ENCODE measurements at regions of chr1 and their contacts with region 1.

Region 1: GRCh38 chr1:205658943-205659581 is 21.2 kb downstream of the SLC45A3 start:
- DNase-seq: peak; percentile 86
- ATAC-seq: peak; percentile 97
- H3K4me3 Mint-ChIP-seq: no peak overlapping the region
- H3K27ac Mint-ChIP-seq: no peak overlapping the region
- H3K4me1 Mint-ChIP-seq: no peaks in the 10 kb centered on the region
- H3K27me3 Mint-ChIP-seq: no peaks in the 10 kb centered on the region
- CTCF ChIP-seq: peak; percentile 90

Region 2: DNA sequence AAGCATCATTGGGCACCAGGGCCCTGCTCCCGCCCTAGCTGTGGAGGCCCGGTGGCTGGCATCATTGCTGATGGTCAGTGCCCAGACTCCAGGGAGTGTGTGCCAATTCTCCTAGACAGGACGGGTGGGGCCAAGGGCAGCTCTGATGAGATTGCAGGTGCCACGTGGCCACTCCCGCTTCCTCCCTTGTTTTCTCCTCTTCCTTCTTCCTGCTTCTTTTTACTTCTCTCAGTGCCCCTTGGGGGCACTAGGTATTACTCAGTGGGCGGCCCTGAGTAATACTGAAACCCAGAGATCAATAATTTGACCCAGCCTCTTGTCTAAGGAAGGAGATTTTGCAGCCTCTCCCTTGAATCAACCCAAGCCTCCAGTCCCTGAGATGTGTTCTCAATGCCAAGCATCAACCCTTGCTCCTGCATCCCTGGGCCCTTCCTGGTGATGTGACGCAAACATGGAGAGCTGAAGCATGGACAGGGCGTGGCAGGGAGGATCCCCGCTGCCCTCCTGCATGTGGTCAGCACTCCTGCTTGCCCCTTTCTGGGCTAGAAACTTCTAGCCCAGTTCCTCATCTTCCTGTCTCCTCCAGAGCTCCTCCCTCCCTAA is 122.2 kb before region 1 on chr1:
- CTCF ChIA-PET with region 1: interaction called, 105 read pairs
- POLR2A ChIA-PET with region 1: no interaction called
- intact Hi-C with region 1: no loop called
- DNase-seq: peak; percentile 24
- ATAC-seq: peak; percentile 39
- H3K4me3 Mint-ChIP-seq: no peak overlapping the region
- H3K27ac Mint-ChIP-seq: no peak overlapping the region
- H3K4me1 Mint-ChIP-seq: peaks cover 6% of the 10 kb centered on the region
- H3K27me3 Mint-ChIP-seq: peaks cover 11% of the 10 kb centered on the region
- CTCF ChIP-seq: no peak

Region 3: GRCh38 chr1:205575294-205575885 is 83.7 kb before region 1 on chr1:
- CTCF ChIA-PET with region 1: interaction called, 15 read pairs
- POLR2A ChIA-PET with region 1: no interaction called
- intact Hi-C with region 1: no loop called
- DNase-seq: no peak
- ATAC-seq: no peak
- H3K4me3 Mint-ChIP-seq: no peak overlapping the region
- H3K27ac Mint-ChIP-seq: no peak overlapping the region
- H3K4me1 Mint-ChIP-seq: no peaks in the 10 kb centered on the region
- H3K27me3 Mint-ChIP-seq: peaks cover 18% of the 10 kb centered on the region
- CTCF ChIP-seq: no peak

Region 4: DNA sequence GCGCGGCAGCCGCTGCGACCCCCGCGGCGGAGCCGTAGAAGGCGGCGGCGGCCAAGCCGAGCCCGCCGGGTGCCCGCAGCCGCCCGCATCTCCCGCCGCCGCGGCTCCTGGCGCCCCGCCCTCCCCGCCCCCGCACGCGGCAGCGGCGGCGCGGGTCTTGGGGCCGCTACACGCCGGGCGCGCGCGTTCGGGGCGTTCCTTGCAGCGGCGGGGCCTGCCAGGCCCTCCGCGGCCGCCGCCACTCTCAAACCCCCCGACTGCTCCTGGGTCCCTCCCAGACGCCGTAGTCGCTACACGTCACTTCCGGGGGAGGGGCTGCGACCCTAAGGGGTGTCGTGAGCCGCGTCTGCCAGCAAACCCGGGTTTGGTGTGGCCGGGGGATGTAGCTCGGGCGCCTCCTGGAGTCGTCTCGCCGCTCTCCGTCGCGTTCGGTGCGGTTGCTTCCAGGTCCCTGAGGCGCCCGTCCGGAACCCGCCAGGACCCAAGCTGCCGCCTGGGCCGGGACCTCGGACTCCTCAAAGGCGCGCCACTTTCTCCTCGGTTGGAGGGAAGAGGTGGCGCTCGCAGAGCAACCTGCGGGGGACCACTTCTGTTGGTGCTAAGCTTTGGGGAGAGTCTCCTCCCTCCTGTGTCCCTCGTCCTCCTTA is 27.2 kb before region 1 on chr1 and contains the start of gene ELK4:
- CTCF ChIA-PET with region 1: interaction called, 120 read pairs
- POLR2A ChIA-PET with region 1: interaction called, 4 read pairs
- intact Hi-C with region 1: no loop called
- DNase-seq: peak; percentile 99
- ATAC-seq: peak; percentile 85
- H3K4me3 Mint-ChIP-seq: peak within 1 kb of the TSS; percentile 93
- H3K27ac Mint-ChIP-seq: peak within 1 kb of the TSS; percentile 96
- H3K4me1 Mint-ChIP-seq: peaks cover 34% of the 10 kb centered on the region
- H3K27me3 Mint-ChIP-seq: no peaks in the 10 kb centered on the region
- CTCF ChIP-seq: peak; percentile 67
- total RNA-seq, gene ELK4: 61.5 to 62.1 TPM

Region 5: DNA sequence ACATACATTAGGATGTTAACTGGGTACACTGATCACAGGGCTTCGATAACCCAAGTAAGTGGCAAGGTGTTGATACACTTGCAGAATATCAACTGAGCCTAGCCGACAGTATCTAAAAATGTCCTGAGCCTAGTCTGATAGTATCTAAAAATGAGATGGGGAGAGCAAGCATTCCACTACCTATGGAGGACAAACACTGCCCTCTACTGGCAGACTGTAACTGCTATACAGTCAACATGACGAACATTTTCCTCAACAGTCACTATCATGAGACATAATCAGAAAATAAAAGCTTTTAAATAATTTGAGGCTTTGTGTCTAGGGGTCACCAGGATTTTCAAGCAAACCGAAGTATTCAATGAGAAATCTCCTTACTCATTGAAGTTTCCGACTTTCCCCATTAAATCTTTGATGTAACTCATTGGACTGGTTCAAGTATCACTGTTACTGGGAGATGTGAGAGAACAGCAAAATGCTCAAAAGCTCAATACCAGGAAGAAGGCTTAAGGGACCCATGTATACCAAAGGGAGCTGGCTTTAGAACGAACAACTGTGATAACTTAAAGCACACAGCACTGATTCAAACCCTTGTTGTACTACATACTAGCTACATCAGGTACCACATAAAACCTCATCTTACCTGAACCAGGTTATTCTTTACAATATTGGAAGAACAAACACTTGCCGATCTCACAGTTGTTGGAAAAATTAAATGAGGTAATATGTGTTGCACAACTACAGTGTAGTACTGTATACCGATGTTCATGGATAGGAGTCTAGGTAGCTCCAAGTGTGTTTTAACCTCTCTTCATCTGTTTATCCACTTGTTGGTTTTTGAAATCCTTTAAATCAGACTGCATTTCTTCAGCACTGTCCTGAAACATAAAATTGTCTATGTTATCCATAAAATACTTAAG is 52.3 kb after region 1 on chr1:
- CTCF ChIA-PET with region 1: interaction called, 232 read pairs
- POLR2A ChIA-PET with region 1: interaction called, 5 read pairs
- intact Hi-C with region 1: loop called (anchors 2 kb)
- DNase-seq: peak; percentile 83
- ATAC-seq: peak; percentile 87
- H3K4me3 Mint-ChIP-seq: no peak overlapping the region
- H3K27ac Mint-ChIP-seq: peak overlapping the region; percentile 32
- H3K4me1 Mint-ChIP-seq: peaks cover 12% of the 10 kb centered on the region
- H3K27me3 Mint-ChIP-seq: no peaks in the 10 kb centered on the region
- CTCF ChIP-seq: peak; percentile 91

Region 6: DNA sequence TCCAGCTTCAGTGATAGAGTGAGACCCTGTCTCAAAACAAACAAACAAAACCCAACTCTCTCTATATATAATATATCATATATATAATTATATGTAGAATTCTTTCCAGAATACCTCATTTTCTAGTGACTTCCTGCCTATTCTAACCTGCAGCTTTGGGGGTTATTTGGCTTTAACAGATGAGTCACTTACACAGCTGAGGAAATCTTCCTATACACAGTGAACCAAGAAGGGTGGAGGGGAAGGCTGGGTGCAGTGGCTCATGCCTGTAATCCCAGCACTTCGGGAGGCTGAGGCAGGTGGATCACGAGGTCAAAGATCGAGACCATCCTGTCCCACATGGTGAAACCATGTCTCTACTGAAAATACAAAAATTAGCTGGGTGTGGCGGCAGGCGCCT is 107.0 kb after region 1 on chr1:
- CTCF ChIA-PET with region 1: no interaction called
- POLR2A ChIA-PET with region 1: no interaction called
- intact Hi-C with region 1: no loop called
- DNase-seq: no peak
- ATAC-seq: peak; percentile 69
- H3K4me3 Mint-ChIP-seq: no peak overlapping the region
- H3K27ac Mint-ChIP-seq: peak overlapping the region; percentile 46
- H3K4me1 Mint-ChIP-seq: peaks cover 29% of the 10 kb centered on the region
- H3K27me3 Mint-ChIP-seq: no peaks in the 10 kb centered on the region
- CTCF ChIP-seq: no peak

Region 7: DNA sequence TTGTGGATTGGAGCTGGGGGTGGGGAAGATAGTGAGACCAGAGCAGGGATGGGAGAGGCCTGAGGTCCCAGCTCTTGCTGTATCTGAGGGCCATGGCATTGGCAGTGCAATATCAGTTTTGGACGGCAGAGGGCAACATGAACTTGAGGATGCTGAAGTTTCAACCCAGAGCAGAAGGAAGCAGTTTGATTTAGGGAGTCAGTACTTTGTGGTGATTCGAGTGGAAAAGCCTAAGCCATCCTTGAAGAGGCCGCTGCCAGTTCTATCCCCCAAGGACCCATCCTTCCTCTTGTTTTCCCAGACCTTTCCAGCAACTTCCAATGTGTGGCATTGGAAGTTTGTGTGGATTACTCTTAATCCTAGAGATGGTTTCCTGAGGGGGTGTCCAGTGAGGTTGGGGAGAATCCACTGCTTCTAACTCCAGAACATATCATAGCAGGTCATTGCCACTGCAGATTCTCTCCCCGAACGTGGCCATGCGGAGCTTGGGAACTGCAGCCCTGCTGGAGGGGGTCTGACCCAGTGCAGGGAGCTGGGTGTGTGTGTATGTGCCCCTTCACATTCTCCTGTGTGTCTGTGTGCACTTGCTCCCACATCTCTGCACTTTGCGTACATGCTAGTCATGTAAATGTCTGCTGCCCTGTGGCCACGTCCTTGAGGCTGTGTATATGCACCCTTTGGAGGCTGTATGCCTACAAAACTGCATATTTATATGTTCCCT is 260.1 kb after region 1 on chr1:
- CTCF ChIA-PET with region 1: interaction called, 20 read pairs
- POLR2A ChIA-PET with region 1: no interaction called
- intact Hi-C with region 1: no loop called
- DNase-seq: peak; percentile 88
- ATAC-seq: peak; percentile 95
- H3K4me3 Mint-ChIP-seq: no peak overlapping the region
- H3K27ac Mint-ChIP-seq: no peak overlapping the region
- H3K4me1 Mint-ChIP-seq: no peaks in the 10 kb centered on the region
- H3K27me3 Mint-ChIP-seq: no peaks in the 10 kb centered on the region
- CTCF ChIP-seq: peak; percentile 84

Region 8: DNA sequence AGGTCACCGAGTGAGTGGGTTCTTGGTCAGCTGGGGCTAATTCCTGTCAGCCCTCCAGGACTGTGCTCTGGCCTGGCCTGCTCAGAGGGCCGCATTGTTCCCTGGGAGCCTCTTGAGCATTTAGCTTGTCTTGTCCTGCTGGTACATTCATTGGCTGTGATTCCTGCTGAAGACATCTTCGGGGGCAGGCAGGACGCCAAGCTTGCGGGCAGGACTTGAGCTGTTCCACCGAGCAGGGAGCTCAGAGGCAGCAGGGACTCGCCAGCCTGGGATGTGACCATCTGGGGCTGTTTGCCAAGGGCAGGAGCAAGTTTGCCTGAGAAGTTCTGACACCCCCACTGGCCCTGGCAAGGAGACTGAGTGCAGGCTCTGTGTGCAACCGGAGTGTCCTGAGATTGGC is 291.2 kb after region 1 on chr1:
- CTCF ChIA-PET with region 1: no interaction called
- POLR2A ChIA-PET with region 1: no interaction called
- intact Hi-C with region 1: no loop called
- DNase-seq: no peak
- ATAC-seq: no peak
- H3K4me3 Mint-ChIP-seq: no peak overlapping the region
- H3K27ac Mint-ChIP-seq: no peak overlapping the region
- H3K4me1 Mint-ChIP-seq: no peaks in the 10 kb centered on the region
- H3K27me3 Mint-ChIP-seq: no peaks in the 10 kb centered on the region
- CTCF ChIP-seq: no peak